ENCODE measurements at regions of chr6 and their contacts with region 1.

Region 1: GRCh38 chr6:135586841-135587240 is 89.3 kb upstream of the AHI1 start:
- DNase-seq: no peak
- H3K4me3 ChIP-seq: no peak overlapping the region
- H3K27ac ChIP-seq: no peak overlapping the region
- H3K4me1 ChIP-seq: no peaks in the 10 kb centered on the region
- H3K27me3 ChIP-seq: no peaks in the 10 kb centered on the region
- CTCF ChIP-seq: no peak
- POLR2A ChIP-seq: no peak

Region 2: DNA sequence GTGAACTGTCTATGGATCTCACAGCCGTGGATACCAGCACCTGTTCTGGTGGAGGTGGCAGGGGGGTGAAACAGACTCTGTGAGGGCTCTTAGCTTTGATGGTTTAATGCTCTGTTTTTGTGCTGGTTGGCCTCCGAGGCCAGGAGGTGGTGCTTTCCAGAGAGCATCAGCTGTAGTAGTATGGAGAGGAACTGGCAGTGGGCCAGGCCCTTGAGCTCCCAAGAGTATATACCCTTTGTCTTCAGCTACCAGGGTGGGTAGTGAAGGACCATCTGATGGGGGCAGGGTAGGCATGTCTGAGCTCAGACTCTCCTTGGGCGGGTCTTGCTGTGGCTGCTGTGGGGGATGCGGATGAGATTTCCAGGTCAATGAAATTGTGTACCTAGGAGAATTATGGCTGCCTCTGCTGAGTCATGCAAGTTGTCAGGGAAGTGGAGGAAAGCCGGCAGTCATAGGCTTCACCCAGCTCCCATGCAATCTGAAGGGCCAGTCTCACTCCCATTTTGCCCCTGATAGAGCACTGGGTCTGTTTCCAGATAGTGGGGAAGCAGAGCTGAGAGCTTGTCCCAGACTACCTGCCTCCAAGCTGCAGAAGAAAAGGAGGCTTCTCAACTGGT is 13.4 kb after region 1 on chr6:
- intact Hi-C with region 1: loop called (anchors 2 kb)
- DNase-seq: no peak
- H3K4me3 ChIP-seq: no peak overlapping the region
- H3K27ac ChIP-seq: no peak overlapping the region
- H3K4me1 ChIP-seq: no peaks in the 10 kb centered on the region
- H3K27me3 ChIP-seq: no peaks in the 10 kb centered on the region
- CTCF ChIP-seq: no peak
- POLR2A ChIP-seq: no peak

Measured in vagina (tissue), 2 donors.